Upper lobe of right lung (tissue), 1 donor: ENCODE measurements at regions of chr6 and their contacts with region 1.

Region 1: DNA sequence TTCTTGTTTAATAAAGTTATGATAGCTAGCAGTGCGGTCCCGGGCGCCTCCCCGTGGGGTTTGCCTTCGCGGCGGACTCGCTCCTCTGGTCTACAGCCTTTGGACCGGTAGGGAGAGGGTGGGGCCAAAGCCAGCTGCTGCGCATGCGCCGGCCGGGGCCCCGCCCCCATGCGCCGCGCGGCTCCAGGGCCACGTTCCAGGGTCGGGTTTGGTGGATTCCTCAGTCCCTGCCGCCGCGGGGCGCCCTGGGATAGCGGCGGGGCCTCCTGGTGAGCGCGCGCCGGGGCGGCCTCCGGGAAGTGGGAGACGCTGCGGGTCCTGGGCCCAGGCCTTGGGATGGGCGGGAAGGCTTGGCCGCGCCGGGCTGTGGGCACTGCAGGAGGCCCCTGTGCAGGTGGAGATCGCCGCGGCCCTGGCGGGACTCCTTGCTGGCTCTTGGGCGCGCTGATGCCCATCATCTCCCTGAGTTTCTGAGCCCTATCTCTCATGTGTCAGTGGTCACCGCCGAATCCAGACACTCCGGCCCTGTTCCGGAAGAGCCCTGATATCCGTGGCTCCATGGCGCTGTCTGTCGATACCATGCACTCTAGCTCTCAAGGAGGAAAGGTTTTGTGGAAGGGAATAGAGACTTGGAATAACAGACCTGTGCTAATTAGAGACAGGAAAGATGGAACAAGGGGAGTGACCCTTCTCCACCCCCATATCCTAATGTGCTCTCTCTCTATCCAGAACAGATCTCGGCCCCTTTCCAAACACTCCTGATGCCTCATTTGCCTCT is at the start of gene VARS2:
- DNase-seq: peak; percentile 95
- ATAC-seq: peak; percentile 96
- H3K4me3 ChIP-seq: peak within 1 kb of the TSS; percentile 65
- H3K27ac ChIP-seq: peak within 1 kb of the TSS; percentile 90
- H3K4me1 ChIP-seq: peaks cover 17% of the 10 kb centered on the region
- H3K27me3 ChIP-seq: no peaks in the 10 kb centered on the region
- CTCF ChIP-seq: peak; percentile 43
- total RNA-seq, gene VARS2: 28.7 TPM

Region 2: GRCh38 chr6:30990422-30991086 is 76.3 kb after region 1 on chr6:
- intact Hi-C with region 1: no loop called
- DNase-seq: no peak
- ATAC-seq: no peak
- H3K4me3 ChIP-seq: no peak overlapping the region
- H3K27ac ChIP-seq: no peak overlapping the region
- H3K4me1 ChIP-seq: no peaks in the 10 kb centered on the region
- H3K27me3 ChIP-seq: no peaks in the 10 kb centered on the region
- CTCF ChIP-seq: no peak

Region 3: DNA sequence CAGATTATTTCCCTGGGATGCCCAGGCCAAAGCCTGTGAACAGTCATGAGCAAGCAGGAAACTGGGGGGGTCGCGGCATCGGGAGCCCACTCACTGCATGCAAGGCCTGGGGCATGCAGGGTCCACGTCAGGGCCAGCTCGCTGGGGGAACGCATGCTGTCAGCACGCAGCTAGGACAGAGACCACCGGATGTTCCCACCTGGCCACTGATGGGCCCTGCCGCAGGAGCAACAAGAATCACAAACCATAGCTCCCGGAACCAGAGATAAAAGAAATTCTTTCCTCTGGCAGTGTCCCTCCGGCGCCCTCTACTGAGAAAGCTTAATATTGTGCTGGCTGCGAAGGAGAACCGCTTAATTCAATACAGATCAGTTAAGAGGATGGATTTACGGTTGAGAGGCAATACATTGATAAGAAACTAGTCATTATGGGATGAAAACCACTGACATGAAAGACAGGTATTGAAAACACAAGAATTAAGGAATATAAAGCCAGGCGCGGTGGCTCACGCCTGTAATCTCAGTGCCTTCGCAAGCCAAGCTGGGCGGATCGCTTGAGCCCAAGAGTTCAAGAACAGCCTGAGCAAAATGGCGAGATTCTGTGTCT is 165.5 kb after region 1 on chr6:
- intact Hi-C with region 1: loop called (anchors 10 kb)
- DNase-seq: peak; percentile 66
- ATAC-seq: peak; percentile 89
- H3K4me3 ChIP-seq: peak overlapping the region; percentile 3
- H3K27ac ChIP-seq: no peak overlapping the region
- H3K4me1 ChIP-seq: peaks cover 5% of the 10 kb centered on the region
- H3K27me3 ChIP-seq: no peaks in the 10 kb centered on the region
- CTCF ChIP-seq: peak; percentile 85